ENCODE measurements at regions of chr15 and their contacts with region 1.

Region 1: GRCh38 chr15:85730001-85730820 is 64.5 kb downstream of the KLHL25 start:
- DNase-seq: peak; percentile 87
- H3K4me3 Mint-ChIP-seq: no peak overlapping the region
- H3K27ac Mint-ChIP-seq: peak overlapping the region; percentile 13
- H3K4me1 Mint-ChIP-seq: peaks cover 15% of the 10 kb centered on the region
- H3K27me3 Mint-ChIP-seq: no peaks in the 10 kb centered on the region

Region 2: GRCh38 chr15:85840065-85840801 is 110.0 kb after region 1 on chr15:
- intact Hi-C with region 1: loop called (anchors 1 kb)
- DNase-seq: peak; percentile 95
- H3K4me3 Mint-ChIP-seq: peak overlapping the region; percentile 76
- H3K27ac Mint-ChIP-seq: no peak overlapping the region
- H3K4me1 Mint-ChIP-seq: peaks cover 10% of the 10 kb centered on the region
- H3K27me3 Mint-ChIP-seq: peaks cover 14% of the 10 kb centered on the region

Region 3: DNA sequence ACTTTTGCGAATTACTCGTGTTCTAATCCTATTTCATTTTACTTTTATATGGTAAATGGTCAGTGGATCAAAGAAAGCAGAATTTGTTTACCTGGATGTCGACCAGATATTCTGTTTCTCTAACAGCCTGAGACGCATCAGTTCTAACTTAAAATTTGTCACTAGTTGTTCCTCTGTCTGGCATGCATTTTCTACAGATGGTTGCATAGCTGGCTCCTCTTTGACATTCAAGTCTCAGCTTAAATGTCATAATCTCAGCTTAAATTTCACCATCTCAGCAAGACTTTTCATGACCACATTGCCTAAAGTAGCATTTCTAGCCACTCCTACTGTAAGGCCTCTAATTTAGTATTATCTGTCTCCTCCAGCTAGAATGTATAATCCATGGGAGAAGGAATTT is 958.8 kb after region 1 on chr15:
- intact Hi-C with region 1: no loop called
- DNase-seq: no peak
- H3K4me3 Mint-ChIP-seq: no peak overlapping the region
- H3K27ac Mint-ChIP-seq: no peak overlapping the region
- H3K4me1 Mint-ChIP-seq: peaks cover 2% of the 10 kb centered on the region
- H3K27me3 Mint-ChIP-seq: peaks cover 2% of the 10 kb centered on the region

Measured in activated CD4-positive, alpha-beta T cell treated with anti-CD3 and anti-CD28 coated beads, Interleukin-2, amount 10 ng/mL, durations not matched to agents 24 days and 14 days (primary cell).